GM10248 (cell line): ENCODE measurements at regions of chr19 and their contacts with region 1.

Region 1: GRCh38 chr19:2475702-2476450 is at the start of gene GADD45B:
- DNase-seq: peak; percentile 98
- CTCF ChIP-seq: no peak

Region 2: GRCh38 chr19:2273356-2274184 is 202.3 kb before region 1 on chr19:
- CTCF ChIA-PET with region 1: no interaction called
- POLR2A ChIA-PET with region 1: interaction called, 17 read pairs
- DNase-seq: peak; percentile 90
- CTCF ChIP-seq: peak; percentile 95

Region 3: GRCh38 chr19:2488942-2489731 is 13.3 kb after region 1 on chr19:
- CTCF ChIA-PET with region 1: no interaction called
- POLR2A ChIA-PET with region 1: interaction called, 35 read pairs
- DNase-seq: peak; percentile 49
- CTCF ChIP-seq: no peak

Region 4: GRCh38 chr19:2561895-2562294 is 86.0 kb after region 1 on chr19:
- CTCF ChIA-PET with region 1: no interaction called
- POLR2A ChIA-PET with region 1: interaction called, 35 read pairs
- DNase-seq: peak; percentile 87
- CTCF ChIP-seq: no peak

Region 5: GRCh38 chr19:2602391-2603181 is 126.7 kb after region 1 on chr19:
- CTCF ChIA-PET with region 1: interaction called, 126 read pairs
- POLR2A ChIA-PET with region 1: interaction called, 275 read pairs
- DNase-seq: no peak
- CTCF ChIP-seq: no peak

Region 6: DNA sequence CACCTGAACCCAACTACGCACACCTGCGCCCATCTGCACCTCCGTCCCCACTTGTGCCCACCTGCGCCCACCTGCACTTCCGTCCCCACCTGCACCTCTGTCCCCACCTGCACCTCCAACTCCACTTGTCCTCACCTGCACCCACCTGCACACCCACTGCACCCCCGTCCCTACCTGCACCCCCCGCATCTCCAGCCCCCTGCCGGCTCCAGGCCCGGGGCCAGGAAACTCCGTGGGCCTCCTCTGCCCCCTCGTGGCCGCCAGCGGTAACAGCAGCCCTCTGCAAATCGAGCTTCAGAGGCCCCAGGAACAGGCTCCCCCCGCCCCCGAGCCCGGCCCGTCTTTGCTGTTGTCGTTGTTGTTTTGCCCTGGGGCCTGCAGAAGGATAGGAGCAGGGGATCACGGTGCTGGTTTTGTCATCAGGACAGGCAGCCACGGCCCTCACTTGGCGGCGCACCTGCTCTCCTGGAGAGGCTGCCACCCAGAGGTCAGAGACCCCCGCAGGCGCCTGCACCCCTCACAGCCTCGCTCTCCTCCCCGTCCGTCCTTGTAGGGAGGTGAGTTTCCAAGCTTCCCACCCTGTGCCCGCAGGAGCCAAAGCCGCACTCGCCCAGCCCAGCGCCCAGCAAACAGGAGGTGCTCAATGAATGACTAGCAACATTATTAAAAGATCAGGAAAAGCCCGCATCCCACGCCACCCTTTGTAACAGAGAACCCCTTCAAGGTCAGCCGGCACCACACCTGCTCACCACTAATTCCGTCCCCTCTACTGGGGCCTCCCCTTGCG is 161.2 kb after region 1 on chr19:
- CTCF ChIA-PET with region 1: interaction called, 24 read pairs
- POLR2A ChIA-PET with region 1: interaction called, 41 read pairs
- DNase-seq: peak; percentile 91
- CTCF ChIP-seq: peak; percentile 87

Region 7: DNA sequence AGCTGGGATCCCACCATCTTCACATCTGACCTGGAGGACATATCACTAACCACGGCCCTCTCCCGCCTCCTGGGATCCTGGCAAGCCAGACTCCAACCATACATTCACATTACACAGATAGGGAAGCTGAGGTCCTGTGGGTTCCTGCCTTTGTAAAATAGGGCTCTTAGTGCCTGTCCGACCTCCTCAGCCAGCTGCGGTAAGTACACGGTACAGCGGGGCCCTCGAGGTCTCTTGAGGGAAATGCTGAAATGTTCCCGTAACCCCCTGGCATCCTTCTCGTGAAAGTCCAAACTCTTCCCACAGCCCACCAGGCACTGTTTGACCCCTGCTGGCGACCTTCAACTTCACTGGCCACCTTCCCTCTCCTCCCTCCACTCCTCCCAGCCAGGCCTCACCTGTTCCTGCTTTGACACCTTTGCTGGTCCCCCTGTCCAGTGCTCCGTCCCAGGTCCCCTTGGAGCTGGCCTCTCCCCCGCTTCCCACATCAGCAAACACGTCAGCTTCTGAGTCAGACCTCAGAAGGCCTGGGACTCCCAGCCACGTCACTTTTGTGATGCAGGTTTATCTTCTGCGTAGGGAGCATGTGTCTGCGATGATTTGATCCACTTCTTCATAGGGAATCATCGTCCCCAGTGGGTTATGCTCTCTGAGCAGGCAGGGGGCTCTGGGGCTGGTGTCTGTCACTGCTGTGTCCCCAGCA is 235.4 kb after region 1 on chr19:
- CTCF ChIA-PET with region 1: no interaction called
- POLR2A ChIA-PET with region 1: no interaction called
- DNase-seq: no peak
- CTCF ChIP-seq: no peak